Heart right ventricle (tissue), 16 donors: ENCODE measurements at regions of chr10 and their contacts with region 1.

Region 1: DNA sequence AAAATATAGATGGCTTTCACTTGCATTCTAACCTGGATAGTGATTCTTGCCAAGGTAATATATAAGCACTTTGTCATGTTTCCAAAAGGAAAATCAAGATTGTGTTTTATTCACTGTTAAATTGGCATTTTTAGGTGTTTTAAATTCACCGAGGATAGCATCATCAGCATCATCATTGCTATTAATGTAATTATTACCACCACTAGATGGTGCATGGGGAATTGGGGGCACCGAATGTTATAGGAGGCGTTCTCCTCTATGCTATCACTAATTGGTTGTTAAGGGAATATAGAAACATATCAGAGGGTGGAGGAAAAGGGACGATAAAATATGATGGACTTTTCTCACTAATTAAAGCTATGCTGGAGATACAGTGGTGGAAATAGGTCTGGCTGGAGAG is 95.5 kb downstream of the CELF2 start:
- DNase-seq: no peak
- ATAC-seq: no peak
- H3K4me3 ChIP-seq: no peak overlapping the region
- H3K27ac ChIP-seq: peak overlapping the region in 4 of 10 donors; percentile 33 to 73 (median 68)
- H3K4me1 ChIP-seq: peaks cover 0 to 69% (median 45%) of the 10 kb centered on the region in 9 donors
- H3K27me3 ChIP-seq: no peaks in the 10 kb centered on the region
- CTCF ChIP-seq: peak in 8 of 9 donors; percentile 8 to 49 (median 34)

Region 2: DNA sequence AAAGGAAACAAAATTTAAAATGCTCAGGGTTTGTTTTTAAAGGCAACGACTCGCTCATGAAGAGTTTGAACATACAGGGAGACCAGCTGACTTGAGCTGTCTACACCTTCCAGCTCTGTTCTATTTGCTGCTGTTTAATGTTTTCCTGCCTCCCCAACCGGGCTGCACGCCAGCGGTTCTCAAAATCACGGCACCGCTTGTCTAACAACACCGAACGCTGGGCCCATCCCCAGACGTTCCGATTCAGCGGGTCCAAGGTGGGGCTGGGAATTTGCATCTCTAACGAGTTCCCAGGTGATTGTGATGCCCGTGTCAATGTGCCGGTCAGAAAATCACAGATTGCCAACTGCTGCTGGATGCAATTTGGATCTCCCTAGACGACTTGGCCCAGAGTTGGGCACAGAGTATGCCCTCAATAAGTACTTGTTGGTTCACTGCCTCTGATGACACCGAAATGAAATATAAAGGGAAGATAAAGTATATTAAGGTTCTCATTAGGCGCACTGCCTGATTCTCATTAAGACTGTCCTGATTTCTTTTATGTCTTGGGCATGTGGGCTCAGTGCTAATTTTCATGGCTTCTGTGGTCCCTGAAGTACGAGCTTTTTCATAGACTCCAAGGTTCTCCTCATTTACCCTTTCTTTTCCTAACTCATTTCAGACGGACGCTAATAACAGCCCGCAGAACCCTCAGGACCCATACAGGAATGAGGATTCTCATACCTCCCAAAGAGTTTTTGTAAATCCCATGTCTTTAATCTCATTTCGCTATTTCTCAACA is 67.0 kb before region 1 on chr10:
- intact Hi-C with region 1: loop called in 1 of 10 experiments (anchors 5 kb)
- DNase-seq: peak; percentile 70 to 82
- ATAC-seq: peak; percentile 32 to 82 (median 72)
- H3K4me3 ChIP-seq: peak overlapping the region in 7 of 10 donors; percentile 1 to 28 (median 16)
- H3K27ac ChIP-seq: peak overlapping the region; percentile 61 to 86 (median 71)
- H3K4me1 ChIP-seq: peaks cover 25 to 89% (median 75%) of the 10 kb centered on the region in 9 donors
- H3K27me3 ChIP-seq: no peaks in the 10 kb centered on the region
- CTCF ChIP-seq: no peak

Region 3: GRCh38 chr10:11264296-11265048 is 151.3 kb after region 1 on chr10:
- intact Hi-C with region 1: loop called in 2 of 10 experiments (anchors 5 to 10 kb)
- DNase-seq: no peak
- ATAC-seq: no peak
- H3K4me3 ChIP-seq: no peak overlapping the region
- H3K27ac ChIP-seq: peak overlapping the region in 4 of 10 donors; percentile 2 to 76 (median 74)
- H3K4me1 ChIP-seq: peaks cover 3 to 75% (median 56%) of the 10 kb centered on the region in 9 donors
- H3K27me3 ChIP-seq: no peaks in the 10 kb centered on the region
- CTCF ChIP-seq: no peak

Region 4: DNA sequence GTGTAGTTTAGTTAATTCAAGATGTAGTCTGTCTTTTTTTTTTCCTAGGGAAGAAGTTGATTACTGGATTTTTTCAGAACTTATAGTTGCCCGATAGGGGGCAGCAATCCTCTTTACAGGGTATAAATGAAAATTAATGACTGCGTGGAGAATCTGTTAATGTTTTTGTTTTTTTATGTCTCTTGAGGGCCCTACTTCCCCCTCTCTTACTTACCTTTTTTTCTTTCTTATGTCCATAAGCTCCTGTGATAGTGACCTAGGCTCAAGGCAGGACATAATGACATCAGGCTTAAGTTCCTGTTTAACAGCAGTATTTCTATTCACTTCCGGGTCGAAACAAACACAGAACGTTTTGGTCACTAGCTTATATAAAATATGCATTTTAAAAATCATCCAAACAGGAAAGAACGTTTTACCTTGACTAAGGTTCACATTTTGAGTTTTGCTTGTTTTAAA is 1101.6 kb after region 1 on chr10:
- intact Hi-C with region 1: no loop called
- DNase-seq: peak in 1 of 2 donors; percentile 40
- ATAC-seq: peak in 7 of 8 donors; percentile 23 to 53 (median 33)
- H3K4me3 ChIP-seq: peak overlapping the region in 4 of 10 donors; percentile 11 to 30 (median 20)
- H3K27ac ChIP-seq: peak overlapping the region in 4 of 10 donors; percentile 14 to 65 (median 32)
- H3K4me1 ChIP-seq: peaks cover 0 to 28% (median 11%) of the 10 kb centered on the region in 9 donors
- H3K27me3 ChIP-seq: no peaks in the 10 kb centered on the region
- CTCF ChIP-seq: peak; percentile 34 to 80 (median 70)